AG04450 (cell line): ENCODE measurements at regions of chr7 and their contacts with region 1.

Region 1: DNA sequence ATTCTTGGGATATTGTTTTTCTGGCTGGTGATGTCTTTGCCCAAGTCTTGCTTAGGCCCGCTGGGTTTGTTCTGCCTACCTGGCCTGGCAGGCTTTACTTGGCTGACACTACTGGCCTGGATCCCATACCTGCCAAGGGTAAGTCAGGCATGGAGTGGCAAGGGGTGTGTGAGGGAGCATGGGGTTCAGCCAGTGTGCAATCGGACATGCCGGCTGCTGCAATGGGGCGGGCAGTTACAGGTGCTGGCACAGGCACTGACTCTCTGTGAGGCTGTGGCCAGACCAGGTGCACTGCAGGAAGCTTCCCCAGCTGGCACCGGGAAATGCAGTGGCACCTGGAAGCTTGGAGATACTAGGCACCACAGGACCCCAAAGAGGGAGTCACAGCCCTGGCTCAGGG is 168.4 kb downstream of the PON1 start:
- DNase-seq: no peak
- H3K4me3 ChIP-seq: no peak overlapping the region
- H3K27ac ChIP-seq: no peak overlapping the region
- H3K27me3 ChIP-seq: no peaks in the 10 kb centered on the region
- CTCF ChIP-seq: no peak

Region 2: DNA sequence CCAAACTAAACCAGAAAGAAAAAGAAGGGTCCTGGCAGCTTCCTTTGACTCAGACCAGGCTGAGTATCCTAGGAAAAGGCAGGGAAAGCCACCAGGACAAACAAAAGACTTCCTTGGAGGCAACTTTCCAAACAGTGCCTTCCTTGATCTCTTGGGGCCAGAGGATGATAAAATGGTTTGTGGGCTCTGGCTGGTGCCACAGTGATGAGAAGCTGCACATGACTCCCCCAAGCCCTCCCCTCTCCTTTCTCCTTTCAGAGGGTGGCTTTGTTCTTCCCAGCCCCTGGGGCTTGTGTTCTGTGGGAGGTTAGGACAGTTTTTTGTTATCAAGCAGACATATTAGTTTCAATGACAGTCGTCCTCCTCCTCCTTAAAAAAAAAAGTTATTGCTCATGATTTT is 1370.5 kb after region 1 on chr7:
- CTCF ChIA-PET with region 1: interaction called, 10 read pairs
- POLR2A ChIA-PET with region 1: no interaction called
- DNase-seq: no peak
- H3K4me3 ChIP-seq: no peak overlapping the region
- H3K27ac ChIP-seq: no peak overlapping the region
- H3K27me3 ChIP-seq: no peaks in the 10 kb centered on the region
- CTCF ChIP-seq: no peak